ENCODE measurements at regions of chr10 and their contacts with region 1.

Region 1: GRCh38 chr10:24724381-24725228 is 918 bp upstream of the ARHGAP21 start:
- DNase-seq: peak; percentile 92
- ATAC-seq: peak; percentile 85
- H3K4me3 ChIP-seq: peak overlapping the region; percentile 76 to 77
- H3K27ac ChIP-seq: peak overlapping the region; percentile 90
- H3K4me1 ChIP-seq: peaks cover 3 to 14% of the 10 kb centered on the region in 2 experiments; a peak in 3 of 4 replicates
- H3K27me3 ChIP-seq: no peaks in the 10 kb centered on the region
- CTCF ChIP-seq: no peak
- POLR2A ChIP-seq: peak; percentile 78
- RAD21 ChIP-seq: no peak

Region 2: GRCh38 chr10:24814568-24815313 is 90.1 kb after region 1 on chr10:
- CTCF ChIA-PET with region 1: no interaction called
- POLR2A ChIA-PET with region 1: no interaction called
- RAD21 ChIA-PET with region 1: no interaction called
- intact Hi-C with region 1: loop called (anchors 1 kb)
- DNase-seq: peak; percentile 54
- ATAC-seq: peak; percentile 89
- H3K4me3 ChIP-seq: peak overlapping the region in 1 of 2 experiments; percentile 32; a peak in 3 of 4 replicates
- H3K27ac ChIP-seq: peak overlapping the region; percentile 39; the same call in 1 of the 2 replicates
- H3K4me1 ChIP-seq: peaks cover 12 to 22% of the 10 kb centered on the region in 2 experiments; a peak in 3 of 4 replicates
- H3K27me3 ChIP-seq: no peaks in the 10 kb centered on the region
- CTCF ChIP-seq: no peak
- POLR2A ChIP-seq: no peak
- RAD21 ChIP-seq: peak; percentile 18; the same call in 1 of the 2 replicates

Region 3: DNA sequence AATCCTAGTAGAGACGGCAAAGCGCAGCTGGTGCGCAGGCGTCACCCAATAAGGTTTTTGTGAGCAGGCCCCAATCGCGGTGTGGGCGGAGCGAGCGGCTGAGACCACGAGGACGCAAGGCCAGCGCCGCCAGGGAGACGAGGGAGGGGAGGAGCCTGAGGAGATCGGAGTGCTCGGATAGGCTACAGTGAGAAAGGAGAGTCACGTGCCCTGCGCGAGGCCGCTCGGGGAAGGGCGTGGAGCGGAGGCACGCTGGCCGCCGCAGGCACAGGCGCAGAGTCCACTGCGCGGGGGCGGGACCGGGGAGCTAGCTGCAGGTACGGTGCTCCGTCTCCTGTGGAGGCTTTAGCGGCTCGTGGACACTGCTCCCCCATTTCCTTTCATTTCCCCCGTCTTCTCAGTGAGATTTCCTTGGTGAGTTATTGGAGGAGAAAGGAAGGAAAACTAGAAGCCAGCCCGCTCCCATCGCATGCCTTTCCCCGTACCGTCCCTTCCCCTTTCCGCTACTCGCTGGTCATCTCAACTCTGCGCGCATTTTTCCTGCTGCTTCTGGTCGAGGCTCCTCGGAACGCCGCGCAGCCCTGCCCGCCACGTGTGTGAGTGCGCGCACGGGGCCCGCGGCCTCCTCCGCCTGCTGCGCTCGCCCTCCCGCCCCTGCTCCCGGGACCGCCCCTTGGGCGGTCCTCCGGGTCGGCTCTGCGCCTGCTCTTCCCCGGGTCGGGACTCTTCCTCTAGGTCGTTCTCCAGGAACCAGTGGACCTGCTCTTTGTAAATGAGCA is 292.0 kb after region 1 on chr10 and contains the start of gene THNSL1:
- CTCF ChIA-PET with region 1: no interaction called
- POLR2A ChIA-PET with region 1: no interaction called
- RAD21 ChIA-PET with region 1: no interaction called
- intact Hi-C with region 1: loop called (anchors 2 kb)
- DNase-seq: peak; percentile 97
- ATAC-seq: peak; percentile 97
- H3K4me3 ChIP-seq: peak within 1 kb of the TSS; percentile 55 to 61
- H3K27ac ChIP-seq: peak within 1 kb of the TSS; percentile 92
- H3K4me1 ChIP-seq: peaks cover 10 to 29% of the 10 kb centered on the region in 2 experiments; a peak in 3 of 4 replicates
- H3K27me3 ChIP-seq: no peaks in the 10 kb centered on the region
- CTCF ChIP-seq: no peak
- POLR2A ChIP-seq: peak; percentile 72
- RAD21 ChIP-seq: no peak
- total RNA-seq, gene THNSL1: 7.7 TPM

Region 4: DNA sequence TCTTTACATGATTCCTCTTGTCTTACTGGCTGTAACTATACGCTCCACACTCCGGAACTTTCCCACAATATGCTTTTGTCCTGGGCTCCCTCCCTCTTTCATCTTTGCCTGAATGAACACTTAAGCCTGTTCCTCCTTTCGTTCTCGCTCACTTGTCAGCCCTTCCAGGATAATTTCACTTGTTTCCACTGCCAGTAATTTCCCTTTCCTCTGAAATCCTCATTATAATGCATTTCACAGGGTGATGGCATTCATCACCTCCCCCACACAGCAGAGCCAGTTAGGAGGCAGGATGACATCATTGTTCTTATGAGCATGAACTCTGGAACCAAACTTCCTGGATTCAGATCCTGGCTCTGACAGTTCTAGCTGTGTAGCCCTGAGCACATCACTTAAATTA is 822.8 kb after region 1 on chr10:
- CTCF ChIA-PET with region 1: no interaction called
- POLR2A ChIA-PET with region 1: no interaction called
- RAD21 ChIA-PET with region 1: no interaction called
- intact Hi-C with region 1: no loop called
- DNase-seq: no peak
- ATAC-seq: no peak
- H3K4me3 ChIP-seq: no peak overlapping the region
- H3K27ac ChIP-seq: no peak overlapping the region
- H3K4me1 ChIP-seq: no peaks in the 10 kb centered on the region
- H3K27me3 ChIP-seq: no peaks in the 10 kb centered on the region
- CTCF ChIP-seq: no peak
- POLR2A ChIP-seq: no peak
- RAD21 ChIP-seq: no peak

Measured in HCT116 (cell line).